K562 (cell line): ENCODE measurements at regions of chr14 and their contacts with region 1.

Region 1: DNA sequence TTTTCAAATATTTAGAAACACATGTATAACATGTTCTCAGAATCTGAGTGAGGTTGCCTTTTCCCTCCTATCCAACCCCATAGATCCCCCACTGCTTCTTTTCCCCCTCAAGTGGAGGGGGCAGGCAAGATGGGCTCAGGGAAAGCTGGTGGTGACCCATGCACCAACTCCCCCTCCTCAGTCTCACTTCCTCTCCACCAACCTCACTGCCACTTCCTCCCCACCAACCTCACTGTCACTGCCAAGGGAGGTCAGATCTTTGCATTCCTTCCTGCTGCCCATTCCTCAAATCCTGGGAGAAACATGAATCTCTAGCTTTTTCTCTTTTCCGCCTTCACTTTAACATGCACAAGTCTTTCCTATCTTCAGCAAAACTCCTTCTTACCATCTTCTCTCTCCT is 48.7 kb downstream of the SPTB start:
- DNase-seq: no peak
- ATAC-seq: no peak
- H3K4me3 ChIP-seq: no peak overlapping the region
- H3K27ac ChIP-seq: no peak overlapping the region
- H3K4me1 ChIP-seq: peaks cover 13 to 31% of the 10 kb centered on the region in 2 experiments; a peak in 3 of 5 replicates
- H3K27me3 ChIP-seq: no peaks in the 10 kb centered on the region
- CTCF ChIP-seq: no peak
- EP300 ChIP-seq: no peak
- POLR2A ChIP-seq: no peak
- RAD21 ChIP-seq: no peak

Region 2: GRCh38 chr14:64841121-64841651 is 10.2 kb after region 1 on chr14:
- CTCF ChIA-PET with region 1: no interaction called
- POLR2A ChIA-PET with region 1: interaction called, 10 read pairs
- in situ Hi-C with region 1: no loop called
- intact Hi-C with region 1: no loop called
- DNase-seq: peak; percentile 55 to 77 (median 62)
- ATAC-seq: peak; percentile 73
- H3K4me3 ChIP-seq: peak overlapping the region; percentile 2; the same call in 1 of the 2 replicates
- H3K27ac ChIP-seq: peak overlapping the region; percentile 86
- H3K4me1 ChIP-seq: peaks cover 10 to 64% of the 10 kb centered on the region in 2 experiments; a peak in 3 of 5 replicates
- H3K27me3 ChIP-seq: no peaks in the 10 kb centered on the region
- CTCF ChIP-seq: peak; percentile 43 to 61 (median 47)
- EP300 ChIP-seq: no peak
- POLR2A ChIP-seq: no peak
- RAD21 ChIP-seq: 0 out of 4 replicates have a peak, but pooled peaks of 1 of the 2 experiments have one; percentile 21